MCF 10A (cell line): ENCODE measurements at regions of chr10 and their contacts with region 1.

Region 1: GRCh38 chr10:112140110-112140970 is 43.2 kb downstream of the GPAM start:
- DNase-seq: peak; percentile 88
- H3K4me3 Mint-ChIP-seq: no peak overlapping the region
- H3K27ac Mint-ChIP-seq: no peak overlapping the region
- H3K4me1 Mint-ChIP-seq: no peaks in the 10 kb centered on the region
- H3K27me3 Mint-ChIP-seq: no peaks in the 10 kb centered on the region
- CTCF ChIP-seq: peak; percentile 92

Region 2: GRCh38 chr10:110610308-110610774 is 1530.0 kb before region 1 on chr10:
- CTCF ChIA-PET with region 1: interaction called, 4 read pairs
- POLR2A ChIA-PET with region 1: no interaction called
- intact Hi-C with region 1: loop called (anchors 10 kb)
- DNase-seq: peak; percentile 78
- H3K4me3 Mint-ChIP-seq: no peak overlapping the region
- H3K27ac Mint-ChIP-seq: no peak overlapping the region
- H3K4me1 Mint-ChIP-seq: no peaks in the 10 kb centered on the region
- H3K27me3 Mint-ChIP-seq: no peaks in the 10 kb centered on the region
- CTCF ChIP-seq: peak; percentile 62

Region 3: DNA sequence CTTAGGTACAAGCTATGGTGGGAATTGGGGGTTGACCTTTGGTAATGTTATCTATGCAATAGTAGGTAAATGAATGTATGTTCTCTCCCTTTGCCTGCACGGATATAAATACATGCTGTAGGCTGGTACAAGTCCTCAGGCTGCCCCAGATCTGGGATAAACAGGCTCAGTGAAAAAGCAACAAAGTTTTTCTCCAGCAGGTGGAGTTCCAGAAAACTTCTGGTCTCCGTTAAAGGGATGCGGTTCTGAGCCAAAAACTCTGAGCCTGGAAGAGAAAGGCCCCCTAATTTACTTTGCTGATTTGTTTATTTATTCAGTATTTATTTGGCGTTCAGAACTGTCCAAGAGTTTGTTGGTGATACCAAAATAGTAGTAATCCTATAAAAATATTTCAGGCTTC is 858.8 kb before region 1 on chr10:
- CTCF ChIA-PET with region 1: interaction called, 6 read pairs
- POLR2A ChIA-PET with region 1: no interaction called
- intact Hi-C with region 1: loop called (anchors 2 kb)
- DNase-seq: peak; percentile 25
- H3K4me3 Mint-ChIP-seq: no peak overlapping the region
- H3K27ac Mint-ChIP-seq: no peak overlapping the region
- H3K4me1 Mint-ChIP-seq: no peaks in the 10 kb centered on the region
- H3K27me3 Mint-ChIP-seq: no peaks in the 10 kb centered on the region
- CTCF ChIP-seq: peak; percentile 29

Region 4: GRCh38 chr10:111756217-111757061 is 383.9 kb before region 1 on chr10:
- CTCF ChIA-PET with region 1: interaction called, 93 read pairs
- POLR2A ChIA-PET with region 1: no interaction called
- intact Hi-C with region 1: loop called (anchors 1 kb)
- DNase-seq: peak; percentile 71
- H3K4me3 Mint-ChIP-seq: peak overlapping the region; percentile 26
- H3K27ac Mint-ChIP-seq: no peak overlapping the region
- H3K4me1 Mint-ChIP-seq: peaks cover 8% of the 10 kb centered on the region
- H3K27me3 Mint-ChIP-seq: peaks cover 15% of the 10 kb centered on the region
- CTCF ChIP-seq: peak; percentile 49

Region 5: DNA sequence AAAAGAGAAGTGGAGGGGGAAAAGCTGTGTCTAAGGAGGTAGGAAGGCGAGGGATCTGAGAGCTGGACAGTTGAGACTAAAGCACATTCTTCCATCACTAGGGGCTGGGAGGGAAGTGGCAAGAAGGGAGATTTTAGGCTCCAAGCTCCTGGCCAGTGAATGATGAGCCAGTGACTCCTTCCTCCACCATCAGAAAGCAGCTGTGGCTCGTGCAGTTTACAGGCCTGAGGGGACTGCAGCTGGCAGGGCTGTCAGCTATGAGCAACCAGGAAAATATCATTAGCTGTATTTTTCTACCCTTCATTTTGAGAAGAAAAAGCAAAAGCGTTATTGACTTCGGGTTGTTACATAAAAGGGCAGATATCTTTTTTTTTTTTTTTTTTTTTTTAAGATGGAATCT is 17.5 kb before region 1 on chr10:
- CTCF ChIA-PET with region 1: interaction called, 113 read pairs
- POLR2A ChIA-PET with region 1: no interaction called
- intact Hi-C with region 1: no loop called
- DNase-seq: no peak
- H3K4me3 Mint-ChIP-seq: no peak overlapping the region
- H3K27ac Mint-ChIP-seq: no peak overlapping the region
- H3K4me1 Mint-ChIP-seq: no peaks in the 10 kb centered on the region
- H3K27me3 Mint-ChIP-seq: peaks cover 20% of the 10 kb centered on the region
- CTCF ChIP-seq: no peak

Region 6: GRCh38 chr10:112215342-112215774 is 75.0 kb after region 1 on chr10:
- CTCF ChIA-PET with region 1: no interaction called
- POLR2A ChIA-PET with region 1: no interaction called
- intact Hi-C with region 1: no loop called
- DNase-seq: no peak
- H3K4me3 Mint-ChIP-seq: no peak overlapping the region
- H3K27ac Mint-ChIP-seq: no peak overlapping the region
- H3K4me1 Mint-ChIP-seq: peaks cover 11% of the 10 kb centered on the region
- H3K27me3 Mint-ChIP-seq: no peaks in the 10 kb centered on the region
- CTCF ChIP-seq: no peak

Region 7: DNA sequence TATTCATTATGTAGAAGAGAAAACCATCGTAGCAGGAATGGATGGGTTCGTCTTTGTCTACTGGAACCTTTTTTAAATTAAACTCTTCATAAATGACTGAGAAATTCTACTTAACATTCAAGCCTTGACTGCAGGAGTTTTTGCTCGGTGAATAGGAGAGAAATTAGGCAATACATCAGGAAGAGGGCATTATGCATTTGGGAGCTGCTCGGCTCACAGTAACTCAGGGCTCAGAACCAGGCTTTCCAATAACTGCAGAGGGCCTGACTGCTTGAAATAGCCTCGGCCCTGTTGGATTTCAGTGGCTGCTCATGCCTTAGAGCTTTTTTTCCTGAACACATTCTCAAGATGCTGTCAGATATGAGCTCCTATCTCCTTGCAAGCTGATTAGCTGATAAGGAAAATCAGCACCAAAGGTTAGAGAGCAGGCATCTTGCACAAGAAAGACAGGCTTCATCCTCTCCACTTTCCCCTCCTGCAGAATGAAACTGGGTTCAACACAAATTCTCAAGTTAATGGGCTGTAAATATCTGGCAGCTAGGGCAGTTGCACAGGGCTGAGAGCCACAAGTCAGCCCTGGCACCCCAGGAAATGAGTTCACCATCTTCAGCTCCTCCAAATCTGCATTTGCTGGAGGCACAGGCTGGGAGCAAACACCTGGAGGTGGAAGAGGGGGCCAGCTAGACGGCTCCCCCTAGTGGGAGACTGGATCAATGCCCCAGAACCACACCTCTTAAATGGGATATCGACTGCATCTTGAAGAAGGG is 167.2 kb after region 1 on chr10:
- CTCF ChIA-PET with region 1: interaction called, 37 read pairs
- POLR2A ChIA-PET with region 1: interaction called, 4 read pairs
- intact Hi-C with region 1: loop called (anchors 1 kb)
- DNase-seq: peak; percentile 74
- H3K4me3 Mint-ChIP-seq: no peak overlapping the region
- H3K27ac Mint-ChIP-seq: no peak overlapping the region
- H3K4me1 Mint-ChIP-seq: peaks cover 14% of the 10 kb centered on the region
- H3K27me3 Mint-ChIP-seq: no peaks in the 10 kb centered on the region
- CTCF ChIP-seq: peak; percentile 73

Region 8: DNA sequence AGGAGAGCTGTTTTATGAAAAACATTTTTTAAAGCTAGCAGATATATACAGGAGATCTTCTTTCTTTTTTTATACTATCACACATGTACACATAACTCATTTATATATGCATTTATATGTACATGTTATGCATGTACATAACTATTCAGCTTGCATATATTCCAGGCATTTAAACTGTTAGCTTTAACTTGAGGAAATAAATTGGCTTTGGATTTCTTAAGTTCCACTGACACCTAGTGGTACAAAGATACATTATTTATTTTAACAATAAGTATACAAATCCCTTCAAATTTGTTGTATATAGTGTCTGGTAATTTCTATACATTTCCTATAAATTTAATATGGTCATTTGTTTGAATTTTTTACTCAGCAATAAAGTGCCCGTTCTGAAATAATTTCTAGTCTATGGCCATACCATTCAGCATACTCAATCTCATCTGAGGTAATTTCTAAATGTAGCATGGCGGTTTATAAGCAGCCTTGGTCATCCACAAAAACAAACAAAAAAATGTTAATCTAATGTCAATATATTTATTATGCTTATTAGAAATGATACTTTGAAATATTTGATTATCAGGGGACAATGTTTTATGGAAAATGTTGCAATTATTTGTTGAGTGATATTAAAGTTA is 294.8 kb after region 1 on chr10:
- CTCF ChIA-PET with region 1: interaction called, 17 read pairs
- POLR2A ChIA-PET with region 1: no interaction called
- intact Hi-C with region 1: loop called (anchors 1 kb)
- DNase-seq: peak; percentile 45
- H3K4me3 Mint-ChIP-seq: no peak overlapping the region
- H3K27ac Mint-ChIP-seq: no peak overlapping the region
- H3K4me1 Mint-ChIP-seq: no peaks in the 10 kb centered on the region
- H3K27me3 Mint-ChIP-seq: no peaks in the 10 kb centered on the region
- CTCF ChIP-seq: peak; percentile 47